ENCODE measurements at regions of chr15 and their contacts with region 1.

Region 1: DNA sequence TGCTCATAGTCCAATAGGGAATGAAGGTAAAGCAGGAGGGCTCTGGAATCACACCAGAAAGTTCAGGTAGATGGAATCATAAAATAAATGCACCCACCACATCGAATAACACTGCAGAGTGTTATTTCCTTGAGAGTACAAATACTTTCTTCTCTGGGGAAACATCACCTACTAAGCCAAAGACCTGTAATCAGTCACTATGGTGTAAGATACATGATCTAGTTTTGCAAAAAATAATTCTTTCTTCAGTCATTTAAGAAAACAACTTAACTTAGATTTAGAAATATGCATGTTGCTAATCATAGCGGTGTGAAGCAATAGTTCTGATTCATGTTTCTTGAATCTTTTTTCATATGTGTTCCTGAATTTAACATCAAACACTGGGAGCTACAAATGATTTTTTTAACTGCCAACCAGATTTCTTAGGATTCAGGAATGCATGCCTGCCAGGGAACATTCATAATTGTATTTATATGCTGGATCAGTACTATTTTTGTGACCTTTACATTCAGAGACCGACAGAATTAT is 40.2 kb upstream of the MEIS2 start:
- DNase-seq: no peak
- ATAC-seq: no peak
- H3K4me3 ChIP-seq: no peak overlapping the region
- H3K27ac ChIP-seq: no peak overlapping the region
- H3K4me1 ChIP-seq: no peaks in the 10 kb centered on the region
- H3K27me3 ChIP-seq: no peaks in the 10 kb centered on the region
- CTCF ChIP-seq: no peak

Region 2: GRCh38 chr15:36965570-36966342 is 174.8 kb before region 1 on chr15:
- intact Hi-C with region 1: no loop called
- DNase-seq: peak in 1 of 6 donors; percentile 16
- ATAC-seq: peak in 3 of 4 donors; percentile 42 to 56 (median 55)
- H3K4me3 ChIP-seq: no peak overlapping the region
- H3K27ac ChIP-seq: no peak overlapping the region
- H3K4me1 ChIP-seq: peaks cover 7 to 9% (median 8%) of the 10 kb centered on the region in 3 donors
- H3K27me3 ChIP-seq: no peaks in the 10 kb centered on the region
- CTCF ChIP-seq: no peak

Region 3: GRCh38 chr15:37015035-37015434 is 125.6 kb before region 1 on chr15:
- intact Hi-C with region 1: no loop called
- DNase-seq: no peak
- ATAC-seq: peak in 3 of 4 donors; percentile 11 to 53 (median 40)
- H3K4me3 ChIP-seq: no peak overlapping the region
- H3K27ac ChIP-seq: peak overlapping the region in 2 of 4 donors; percentile 8 to 59
- H3K4me1 ChIP-seq: peaks cover 0 to 22% (median 9%) of the 10 kb centered on the region in 3 donors
- H3K27me3 ChIP-seq: no peaks in the 10 kb centered on the region
- CTCF ChIP-seq: no peak

Region 4: GRCh38 chr15:37204692-37205091 is 64.1 kb after region 1 on chr15:
- intact Hi-C with region 1: loop called in 1 of 3 experiments (anchors 10 kb)
- DNase-seq: no peak
- ATAC-seq: peak in 1 of 4 donors; percentile 44
- H3K4me3 ChIP-seq: no peak overlapping the region
- H3K27ac ChIP-seq: no peak overlapping the region
- H3K4me1 ChIP-seq: no peaks in the 10 kb centered on the region
- H3K27me3 ChIP-seq: no peaks in the 10 kb centered on the region
- CTCF ChIP-seq: no peak

Measured in pancreas (tissue), 10 donors.